HEK293 (cell line): ENCODE measurements at regions of chr15 and their contacts with region 1.

Region 1: DNA sequence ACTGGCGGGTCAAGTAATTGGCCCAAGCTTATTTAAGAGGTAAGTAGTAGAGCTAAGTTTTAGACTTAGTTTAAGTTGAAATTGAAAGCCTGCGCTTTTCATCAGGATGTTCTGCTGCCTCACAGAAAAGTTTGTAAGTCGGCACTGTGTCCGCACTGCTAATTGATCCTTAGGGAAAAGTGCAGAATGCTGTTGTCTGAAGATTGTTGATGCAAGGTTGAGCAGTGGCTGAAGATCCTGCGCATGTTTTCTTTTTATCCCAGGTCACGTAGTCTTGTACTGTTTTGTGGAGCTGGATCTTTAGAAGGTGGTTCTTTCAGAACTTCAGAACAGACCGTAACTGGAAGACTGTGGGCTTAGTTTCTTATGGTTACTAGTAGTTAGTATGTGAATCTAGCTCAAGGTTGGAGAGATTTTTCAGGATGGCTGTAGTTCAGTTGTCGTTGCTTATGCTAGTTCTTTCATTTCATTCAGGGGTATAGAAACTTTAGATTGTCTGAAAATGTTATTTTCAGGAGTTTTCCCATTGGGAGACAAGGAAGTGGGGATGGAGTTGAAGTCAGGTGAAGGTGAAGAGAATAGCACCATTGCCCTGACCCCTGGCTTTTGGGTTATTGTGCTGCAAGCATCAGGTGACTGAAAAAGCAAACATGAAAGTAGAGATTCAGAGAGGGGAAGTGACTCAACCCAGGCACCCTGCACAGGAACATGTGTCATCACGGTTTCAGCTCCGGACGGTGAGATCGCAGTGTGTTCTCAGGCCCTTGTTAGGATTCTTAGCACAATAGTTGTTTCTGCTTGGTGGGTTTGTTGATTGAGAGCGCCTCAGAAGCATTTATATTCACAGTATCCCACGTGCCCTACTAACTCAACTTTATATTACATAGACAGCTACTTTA is 32.8 kb downstream of the AKAP13 start:
- H3K4me3 ChIP-seq: no peak overlapping the region
- H3K27ac ChIP-seq: no peak overlapping the region
- H3K4me1 ChIP-seq: peaks cover 30% of the 10 kb centered on the region
- CTCF ChIP-seq: no peak; the same call in 1 of the 2 replicates

Region 2: DNA sequence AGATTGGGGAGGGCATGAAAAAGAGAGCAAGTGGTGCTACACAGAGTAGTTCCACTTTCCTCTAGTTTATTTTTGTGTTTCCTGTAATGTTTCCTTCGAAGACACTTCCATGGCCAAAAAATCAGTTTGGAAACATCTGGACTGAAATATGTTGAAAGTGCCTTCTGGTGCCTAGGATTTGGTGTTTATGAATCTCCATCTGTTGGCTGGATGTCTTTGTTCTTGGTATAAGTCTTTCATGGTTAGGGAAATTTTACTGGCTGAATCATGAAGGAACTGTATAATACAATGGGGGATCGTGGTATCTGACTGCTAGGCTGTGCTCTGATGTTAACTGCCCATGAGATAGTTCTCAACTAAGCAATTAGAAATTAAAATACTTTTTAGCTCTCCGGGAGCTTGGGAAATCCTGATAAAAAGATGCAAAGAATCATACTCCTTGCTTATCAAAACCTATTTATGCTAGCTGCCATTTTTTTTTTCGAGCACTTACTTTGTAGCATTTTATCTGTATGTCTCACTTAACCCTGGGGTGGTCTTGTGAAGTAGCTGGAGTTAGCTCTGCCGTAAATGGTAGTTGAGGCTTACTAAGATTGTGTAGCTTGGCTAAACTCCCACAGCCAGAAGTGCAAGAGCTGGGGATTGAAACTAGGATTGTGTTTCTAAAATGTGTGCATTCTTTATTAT is 10.9 kb before region 1 on chr15:
- CTCF ChIA-PET with region 1: interaction called, 10 read pairs
- POLR2A ChIA-PET with region 1: interaction called, 5 read pairs
- H3K4me3 ChIP-seq: no peak overlapping the region
- H3K27ac ChIP-seq: no peak overlapping the region; the same call in 1 of the 2 replicates
- H3K4me1 ChIP-seq: peaks cover 55% of the 10 kb centered on the region
- CTCF ChIP-seq: no peak